Natural killer cell (primary cell): ENCODE measurements at regions of chr6 and their contacts with region 1.

Region 1: DNA sequence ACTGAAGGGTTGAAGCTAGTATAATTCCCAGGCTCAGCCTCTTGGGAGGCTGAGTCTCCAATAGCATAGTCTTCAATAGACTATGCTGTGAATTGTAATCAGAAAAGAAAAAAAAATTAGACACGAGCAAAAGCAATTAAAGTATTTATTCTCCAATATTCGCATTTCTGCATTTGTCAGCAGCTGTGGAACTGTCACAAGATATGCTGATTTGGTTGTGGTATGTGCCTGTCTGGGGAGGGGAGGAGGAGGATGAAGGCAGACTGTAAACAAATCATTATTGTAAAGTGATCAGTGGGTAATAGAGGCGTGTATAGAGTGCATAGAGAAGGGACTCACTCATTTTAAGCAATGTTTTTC is 10.1 kb upstream of the BICRAL start:
- DNase-seq: peak in 1 of 2 donors; percentile 79
- ATAC-seq: peak; percentile 14 to 29 (median 20)
- H3K4me3 ChIP-seq: peak overlapping the region; percentile 17
- H3K4me3 Mint-ChIP-seq: peak overlapping the region; percentile 92
- H3K27ac ChIP-seq: peak overlapping the region; percentile 98
- H3K27ac Mint-ChIP-seq: peak overlapping the region; percentile 96 to 98
- H3K4me1 ChIP-seq: peaks cover 78% of the 10 kb centered on the region
- H3K4me1 Mint-ChIP-seq: peaks cover 68 to 69% of the 10 kb centered on the region in 2 donors
- H3K27me3 ChIP-seq: no peaks in the 10 kb centered on the region
- H3K27me3 Mint-ChIP-seq: peaks cover 0 to 3% of the 10 kb centered on the region in 2 donors
- CTCF ChIP-seq: no peak

Region 2: GRCh38 chr6:42714098-42714761 is 57.5 kb before region 1 on chr6:
- intact Hi-C with region 1: no loop called
- DNase-seq: no peak
- ATAC-seq: no peak
- H3K4me3 ChIP-seq: no peak overlapping the region
- H3K4me3 Mint-ChIP-seq: no peak overlapping the region
- H3K27ac ChIP-seq: no peak overlapping the region
- H3K27ac Mint-ChIP-seq: no peak overlapping the region
- H3K4me1 ChIP-seq: no peaks in the 10 kb centered on the region
- H3K4me1 Mint-ChIP-seq: no peaks in the 10 kb centered on the region
- H3K27me3 ChIP-seq: no peaks in the 10 kb centered on the region
- H3K27me3 Mint-ChIP-seq: peaks cover 0 to 4% of the 10 kb centered on the region in 2 donors
- CTCF ChIP-seq: no peak

Region 3: DNA sequence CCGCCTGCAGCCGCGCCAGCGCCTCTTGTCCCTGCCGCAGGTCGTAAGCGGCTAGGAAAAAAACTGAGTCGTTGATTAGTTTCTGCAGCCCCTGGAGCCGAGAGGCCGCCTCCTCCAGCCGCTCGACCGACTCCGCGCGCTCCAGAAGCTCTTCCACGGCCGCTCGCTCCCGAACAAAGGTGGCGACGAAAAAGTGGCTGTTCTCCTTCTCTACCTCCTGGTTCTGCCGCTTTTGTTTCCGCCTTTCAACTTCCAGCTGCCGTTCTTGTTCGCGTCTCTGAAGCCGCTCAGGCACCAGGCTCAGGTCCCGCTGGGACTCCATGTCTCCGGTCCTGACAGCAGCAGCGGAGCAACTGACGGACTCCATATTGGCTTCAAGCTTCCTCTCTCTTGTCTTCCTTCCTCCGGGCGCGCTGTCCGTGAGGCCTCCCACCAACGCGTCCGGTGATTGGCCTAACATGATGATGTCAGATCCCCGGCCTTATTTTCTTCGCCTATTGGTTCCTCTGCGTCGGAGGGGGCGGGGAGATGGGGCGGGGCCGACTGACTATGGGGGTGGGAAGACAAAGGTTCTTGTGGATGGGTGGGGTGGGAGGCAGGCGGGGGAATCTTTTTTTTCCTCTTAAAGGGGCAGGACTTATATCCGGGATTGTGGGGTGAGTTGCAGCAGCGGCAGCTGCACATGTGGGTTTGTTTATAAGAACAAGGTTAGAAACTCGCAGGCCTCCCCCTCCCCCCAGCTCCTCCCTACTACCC is 25.8 kb before region 1 on chr6 and contains the start of gene TBCC:
- intact Hi-C with region 1: loop called (anchors 1 kb)
- DNase-seq: peak; percentile 86 to 98
- ATAC-seq: peak; percentile 83 to 92 (median 85)
- H3K4me3 ChIP-seq: peak within 1 kb of the TSS; percentile 98
- H3K4me3 Mint-ChIP-seq: peak within 1 kb of the TSS; percentile 100
- H3K27ac ChIP-seq: peak within 1 kb of the TSS; percentile 95
- H3K27ac Mint-ChIP-seq: peak within 1 kb of the TSS; percentile 98 to 100
- H3K4me1 ChIP-seq: peaks cover 38% of the 10 kb centered on the region
- H3K4me1 Mint-ChIP-seq: peaks cover 22 to 23% of the 10 kb centered on the region in 2 donors
- H3K27me3 ChIP-seq: no peaks in the 10 kb centered on the region
- H3K27me3 Mint-ChIP-seq: no peaks in the 10 kb centered on the region
- CTCF ChIP-seq: no peak
- total RNA-seq, gene TBCC: 64.1 to 77.6 (median 65.6) TPM

Region 4: DNA sequence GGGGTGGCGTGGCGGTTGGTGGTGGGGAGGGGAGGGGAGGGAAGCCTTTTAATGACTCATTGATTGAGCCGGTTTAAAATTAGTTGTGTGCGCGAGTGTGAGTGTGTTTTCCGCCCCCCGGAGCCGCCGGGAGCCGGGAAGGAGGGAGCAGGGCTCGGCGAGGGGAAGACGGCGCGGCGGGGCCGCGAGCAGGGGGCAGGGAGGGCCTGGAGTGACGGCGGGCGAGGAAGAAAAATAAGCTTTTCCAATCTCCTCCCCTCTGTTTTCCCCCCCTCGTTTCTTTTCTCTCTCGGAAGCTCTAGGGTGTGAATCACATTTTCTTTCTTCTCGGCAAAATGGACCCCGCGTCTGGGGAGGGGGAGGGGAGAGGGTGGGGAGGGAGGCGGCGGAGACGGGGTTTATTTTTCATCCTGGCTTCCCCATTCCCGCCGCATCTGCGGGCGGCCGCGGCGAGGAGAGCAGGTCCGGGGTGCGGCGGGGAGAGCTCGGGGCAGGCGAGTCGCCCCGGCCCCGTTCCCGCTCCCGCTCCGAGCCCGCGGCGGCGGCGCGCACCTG is 11.0 kb after region 1 on chr6:
- intact Hi-C with region 1: loop called (anchors 1 kb)
- DNase-seq: peak; percentile 64 to 89
- ATAC-seq: peak; percentile 51 to 69 (median 60)
- H3K4me3 ChIP-seq: peak overlapping the region; percentile 89
- H3K4me3 Mint-ChIP-seq: peak overlapping the region; percentile 95
- H3K27ac ChIP-seq: peak overlapping the region; percentile 100
- H3K27ac Mint-ChIP-seq: no peak overlapping the region
- H3K4me1 ChIP-seq: peaks cover 22% of the 10 kb centered on the region
- H3K4me1 Mint-ChIP-seq: peaks cover 6 to 14% of the 10 kb centered on the region in 2 donors
- H3K27me3 ChIP-seq: no peaks in the 10 kb centered on the region
- H3K27me3 Mint-ChIP-seq: no peaks in the 10 kb centered on the region
- CTCF ChIP-seq: no peak

Region 5: GRCh38 chr6:42819803-42820511 is 48.2 kb after region 1 on chr6:
- intact Hi-C with region 1: loop called (anchors 5 kb)
- DNase-seq: peak in 1 of 2 donors; percentile 52
- ATAC-seq: peak; percentile 93 to 99 (median 98)
- H3K4me3 ChIP-seq: no peak overlapping the region
- H3K4me3 Mint-ChIP-seq: peak overlapping the region; percentile 62
- H3K27ac ChIP-seq: peak overlapping the region; percentile 41
- H3K27ac Mint-ChIP-seq: peak overlapping the region; percentile 83 to 85
- H3K4me1 ChIP-seq: peaks cover 8% of the 10 kb centered on the region
- H3K4me1 Mint-ChIP-seq: peaks cover 19 to 20% of the 10 kb centered on the region in 2 donors
- H3K27me3 ChIP-seq: no peaks in the 10 kb centered on the region
- H3K27me3 Mint-ChIP-seq: no peaks in the 10 kb centered on the region
- CTCF ChIP-seq: no peak

Region 6: DNA sequence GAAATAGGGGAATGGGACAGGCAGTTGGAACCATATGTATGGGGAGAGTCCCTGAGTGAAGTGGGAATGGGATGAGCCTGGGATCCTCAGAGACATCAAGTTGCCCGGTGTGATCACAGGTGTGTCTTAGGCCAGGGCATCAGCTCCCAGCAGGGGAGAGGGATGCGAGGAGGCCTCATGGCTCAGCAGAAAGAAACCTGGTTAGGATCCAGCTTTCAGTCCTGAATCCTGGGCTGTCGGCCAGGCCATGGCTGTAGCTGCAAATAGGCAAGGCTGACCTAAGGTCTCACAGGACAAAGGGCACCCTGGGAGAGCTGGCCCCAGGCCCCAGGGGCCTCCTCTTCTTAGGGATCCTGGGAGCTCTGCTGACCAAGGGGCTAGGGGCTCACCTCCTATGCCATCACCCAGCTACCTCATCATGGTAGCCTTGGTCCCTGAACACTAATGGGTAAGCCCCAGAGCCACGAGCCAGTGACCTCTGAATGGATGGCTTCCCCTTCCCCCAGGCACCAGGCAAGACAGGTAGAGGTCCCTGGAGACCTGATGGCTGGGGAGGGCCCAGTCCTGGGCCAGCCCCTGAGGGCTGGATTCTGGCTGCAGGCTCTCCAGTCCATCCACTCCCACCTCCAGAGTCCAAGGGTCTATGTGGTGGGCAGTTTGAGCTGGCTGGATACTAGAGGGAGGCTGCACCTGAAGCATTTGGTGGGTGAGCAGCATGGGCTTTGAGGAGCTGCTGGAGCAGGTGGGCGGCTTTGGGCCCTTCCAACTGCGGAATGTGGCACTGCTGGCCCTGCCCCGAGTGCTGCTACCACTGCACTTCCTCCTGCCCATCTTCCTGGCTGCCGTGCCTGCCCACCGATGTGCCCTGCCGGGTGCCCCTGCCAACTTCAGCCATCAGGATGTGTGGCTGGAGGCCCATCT is 526.2 kb after region 1 on chr6 and contains the start of gene SLC22A7:
- intact Hi-C with region 1: no loop called
- DNase-seq: no peak
- ATAC-seq: no peak
- H3K4me3 ChIP-seq: no peak within 1 kb of the TSS
- H3K4me3 Mint-ChIP-seq: no peak within 1 kb of the TSS
- H3K27ac ChIP-seq: no peak within 1 kb of the TSS
- H3K27ac Mint-ChIP-seq: no peak within 1 kb of the TSS
- H3K4me1 ChIP-seq: no peaks in the 10 kb centered on the region
- H3K4me1 Mint-ChIP-seq: no peaks in the 10 kb centered on the region
- H3K27me3 ChIP-seq: peaks cover 3% of the 10 kb centered on the region
- H3K27me3 Mint-ChIP-seq: peaks cover 0 to 2% of the 10 kb centered on the region in 2 donors
- CTCF ChIP-seq: no peak
- total RNA-seq, gene SLC22A7: not detected

Region 7: GRCh38 chr6:43383021-43383667 is 611.4 kb after region 1 on chr6:
- intact Hi-C with region 1: loop called (anchors 5 kb)
- DNase-seq: peak in 1 of 2 donors; percentile 32
- ATAC-seq: peak in 2 of 3 donors; percentile 17 to 27
- H3K4me3 ChIP-seq: peak overlapping the region; percentile 12
- H3K4me3 Mint-ChIP-seq: peak overlapping the region; percentile 76
- H3K27ac ChIP-seq: peak overlapping the region; percentile 94
- H3K27ac Mint-ChIP-seq: peak overlapping the region; percentile 85 to 94
- H3K4me1 ChIP-seq: peaks cover 46% of the 10 kb centered on the region
- H3K4me1 Mint-ChIP-seq: peaks cover 68 to 69% of the 10 kb centered on the region in 2 donors
- H3K27me3 ChIP-seq: peaks cover 2% of the 10 kb centered on the region
- H3K27me3 Mint-ChIP-seq: no peaks in the 10 kb centered on the region
- CTCF ChIP-seq: no peak